Activated T-helper 1 cell treated with anti-CD3 and anti-CD28 coated beads, Interleukin-12 subunit alpha, Interleukin-12 subunit beta, Interleukin-2, Interleukin-4 antibody, amounts not matched to agents 30 ng/mL and 10 ng/mL and 1 ng/mL, durations not matched to agents 14 hours and 24 hours and 36 hours (primary cell): ENCODE measurements at regions of chr12 and their contacts with region 1.

Region 1: GRCh38 chr12:92928962-92929915 is at the start of gene EEA1:
- DNase-seq: peak; percentile 92
- H3K4me3 Mint-ChIP-seq: peak within 1 kb of the TSS; percentile 89
- H3K27ac Mint-ChIP-seq: peak within 1 kb of the TSS; percentile 96
- H3K4me1 Mint-ChIP-seq: peaks cover 31% of the 10 kb centered on the region
- H3K27me3 Mint-ChIP-seq: peaks cover 13% of the 10 kb centered on the region
- total RNA-seq, gene EEA1: 17.5 and 18.8 TPM in 2 replicates

Region 2: DNA sequence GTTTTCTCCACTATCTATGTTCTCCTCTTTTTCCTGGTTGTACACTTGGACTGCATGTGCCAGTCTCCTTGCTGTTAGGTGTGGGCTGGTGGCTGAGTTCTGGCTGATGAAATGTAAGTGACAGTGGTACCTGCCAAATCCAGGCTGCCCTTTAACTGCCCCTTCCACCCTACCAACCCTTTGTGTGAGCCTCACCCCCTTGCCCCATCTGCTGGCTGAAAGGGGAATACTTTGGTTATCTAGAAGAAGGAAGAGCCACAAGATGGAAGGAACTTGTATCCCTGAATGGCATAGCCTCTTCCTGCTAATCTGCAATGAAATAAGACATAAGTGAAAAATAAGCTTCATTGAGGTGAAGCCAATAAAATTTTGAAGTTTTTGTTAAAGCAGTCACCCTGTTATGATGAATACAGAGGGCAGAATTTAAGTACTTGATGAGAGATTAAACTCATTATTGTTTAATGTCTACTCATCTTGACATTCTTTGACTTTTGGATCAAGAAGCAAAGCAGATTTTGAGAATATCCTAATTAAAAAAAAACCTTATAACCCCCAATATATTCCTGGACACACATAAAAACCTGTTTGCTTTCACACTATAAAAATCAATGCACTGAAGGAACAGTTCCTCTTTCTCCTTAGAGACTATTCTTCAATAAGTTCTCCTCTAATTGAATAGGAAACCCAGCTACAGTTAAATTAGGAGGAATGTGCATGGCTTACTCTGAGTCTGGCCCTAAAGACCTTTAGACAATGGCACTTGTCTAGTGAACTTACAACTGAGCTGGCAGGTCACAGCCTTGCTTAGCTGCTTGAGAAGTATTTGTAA is 521.0 kb before region 1 on chr12:
- intact Hi-C with region 1: loop called (anchors 5 kb)
- DNase-seq: peak; percentile 37
- H3K4me3 Mint-ChIP-seq: no peak overlapping the region
- H3K27ac Mint-ChIP-seq: no peak overlapping the region
- H3K4me1 Mint-ChIP-seq: peaks cover 46% of the 10 kb centered on the region
- H3K27me3 Mint-ChIP-seq: no peaks in the 10 kb centered on the region

Region 3: DNA sequence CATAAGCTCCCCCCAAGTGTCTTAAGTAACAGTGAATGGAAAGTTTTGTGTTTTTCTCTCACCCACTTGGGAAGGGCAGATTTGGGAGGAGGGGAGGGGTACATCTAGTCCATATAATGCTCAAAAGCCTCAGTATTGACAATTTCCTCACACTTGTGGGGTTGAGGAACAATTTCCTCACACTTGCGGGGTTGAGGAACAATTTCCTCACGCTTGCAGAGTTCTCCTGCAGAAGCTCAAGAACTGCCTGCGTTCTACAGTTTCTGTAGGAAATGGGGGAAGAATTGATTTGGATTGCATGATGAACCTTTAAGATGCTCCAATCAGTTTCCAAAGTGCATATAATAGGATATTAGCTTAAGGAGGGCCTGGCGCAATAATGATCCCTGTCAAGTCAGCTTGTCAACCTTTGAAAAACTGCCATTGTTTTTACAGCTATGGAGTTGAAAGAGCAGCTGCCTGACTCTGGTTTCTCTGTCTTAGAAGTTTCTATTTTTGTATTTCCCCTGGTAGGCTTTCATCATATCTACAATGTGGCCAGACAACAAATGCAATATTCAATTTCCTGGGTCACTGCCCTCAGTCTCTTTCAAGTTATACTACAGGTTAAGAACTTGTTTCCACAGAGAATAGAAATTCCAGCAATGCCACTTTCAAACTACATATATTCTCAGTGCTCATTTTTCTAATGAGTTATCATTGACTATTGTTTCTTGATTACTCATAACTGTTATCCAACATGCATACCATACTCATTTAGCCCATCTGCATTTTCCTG is 159.9 kb before region 1 on chr12:
- intact Hi-C with region 1: no loop called
- DNase-seq: no peak
- H3K4me3 Mint-ChIP-seq: no peak overlapping the region
- H3K27ac Mint-ChIP-seq: no peak overlapping the region
- H3K4me1 Mint-ChIP-seq: peaks cover 11% of the 10 kb centered on the region
- H3K27me3 Mint-ChIP-seq: no peaks in the 10 kb centered on the region

Region 4: GRCh38 chr12:92827836-92828431 is 101.3 kb before region 1 on chr12:
- intact Hi-C with region 1: loop called (anchors 5 kb)
- DNase-seq: no peak
- H3K4me3 Mint-ChIP-seq: no peak overlapping the region
- H3K27ac Mint-ChIP-seq: no peak overlapping the region
- H3K4me1 Mint-ChIP-seq: no peaks in the 10 kb centered on the region
- H3K27me3 Mint-ChIP-seq: no peaks in the 10 kb centered on the region

Region 5: DNA sequence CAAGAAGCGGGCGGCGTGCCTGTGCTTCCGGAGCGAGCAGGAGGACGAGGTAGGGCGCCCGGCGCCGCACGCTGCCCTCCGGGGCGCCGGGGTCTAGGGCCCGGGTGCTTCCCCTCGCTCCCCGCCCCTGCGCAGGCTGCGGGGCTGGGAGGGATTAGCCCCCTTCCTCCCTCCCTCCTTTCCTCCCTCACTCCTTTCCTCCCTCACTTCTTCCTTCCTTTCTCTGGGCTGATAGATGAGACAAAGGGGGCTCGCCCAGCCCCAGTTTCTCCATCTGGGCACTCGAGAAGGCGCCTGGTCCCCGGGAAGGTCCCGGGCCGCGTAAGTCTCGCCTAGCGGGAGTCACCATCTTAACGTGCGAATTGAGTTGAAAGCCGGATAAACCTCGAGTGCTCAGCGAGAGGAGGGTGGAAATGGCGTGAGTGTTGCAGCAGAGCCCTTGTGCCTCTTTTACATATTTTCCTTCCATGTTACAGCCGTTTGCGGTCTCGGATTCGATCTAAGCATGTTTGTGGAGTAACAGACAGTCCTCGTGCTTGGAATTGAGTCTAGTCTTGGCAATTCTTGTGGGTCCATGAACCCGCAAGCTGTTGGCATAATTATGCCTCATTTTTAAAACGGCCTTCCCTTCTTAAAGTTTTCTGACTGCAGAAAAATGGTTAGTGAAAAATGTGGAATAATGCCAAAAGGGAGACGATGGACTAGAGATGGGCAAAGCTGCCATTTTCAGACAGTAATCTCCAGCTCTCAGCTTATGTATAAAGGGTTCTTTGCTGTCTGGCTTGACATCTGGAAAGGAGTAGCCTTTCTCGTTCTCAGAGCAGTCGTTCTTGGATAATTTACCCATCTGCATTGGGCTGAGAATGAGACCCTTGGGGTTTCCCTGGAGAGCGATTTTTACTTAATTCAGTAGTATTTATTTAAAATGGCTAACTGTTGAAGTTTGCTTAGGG is 449.4 kb after region 1 on chr12:
- intact Hi-C with region 1: loop called (anchors 1 kb)
- DNase-seq: peak; percentile 58
- H3K4me3 Mint-ChIP-seq: peak overlapping the region; percentile 100
- H3K27ac Mint-ChIP-seq: peak overlapping the region; percentile 100
- H3K4me1 Mint-ChIP-seq: peaks cover 50% of the 10 kb centered on the region
- H3K27me3 Mint-ChIP-seq: peaks cover 2% of the 10 kb centered on the region

Region 6: DNA sequence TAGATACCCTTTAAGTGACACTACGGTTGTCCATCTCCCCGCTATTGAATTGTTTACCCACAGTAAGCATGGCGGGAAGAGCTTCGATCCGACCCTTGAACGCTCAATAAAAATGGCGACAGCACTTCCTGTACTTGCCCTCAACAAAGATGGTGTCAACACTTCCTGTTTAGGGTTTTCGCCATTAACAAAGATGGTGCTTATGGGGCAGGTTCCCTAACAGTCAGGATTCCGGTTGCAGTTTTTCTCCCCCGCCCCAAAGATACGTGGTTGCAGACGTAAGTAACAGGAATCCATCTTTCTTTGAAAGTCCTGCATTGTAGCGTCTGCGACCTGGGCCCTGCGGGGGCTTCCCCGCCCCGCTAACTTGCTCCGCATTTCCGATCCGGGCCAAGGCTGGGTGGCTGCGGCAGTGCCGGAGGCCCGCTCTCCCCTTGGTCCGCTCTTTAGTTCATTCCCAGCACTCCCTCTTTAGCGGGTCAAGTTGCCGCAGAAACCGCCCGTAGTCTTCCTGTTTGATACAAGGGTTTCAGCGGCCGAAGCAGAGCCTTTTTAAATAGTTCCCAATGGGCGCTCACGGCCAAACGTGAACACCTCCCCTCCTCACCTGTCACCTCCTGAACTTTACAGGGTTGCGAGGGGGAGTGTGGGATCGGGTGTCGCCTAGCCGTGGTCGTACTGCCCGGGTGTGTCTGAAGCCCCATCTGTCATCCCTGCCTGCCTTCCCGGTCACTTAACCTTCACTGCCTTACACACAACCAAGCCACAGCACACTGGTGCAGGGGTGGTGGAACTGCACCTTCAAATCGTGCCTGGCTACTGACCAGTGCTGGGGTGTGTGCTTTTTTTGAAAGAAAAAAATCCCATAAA is 748.2 kb after region 1 on chr12 and contains the start of gene CRADD:
- intact Hi-C with region 1: loop called (anchors 1 kb)
- DNase-seq: peak; percentile 86
- H3K4me3 Mint-ChIP-seq: peak within 1 kb of the TSS; percentile 85
- H3K27ac Mint-ChIP-seq: peak within 1 kb of the TSS; percentile 96
- H3K4me1 Mint-ChIP-seq: peaks cover 38% of the 10 kb centered on the region
- H3K27me3 Mint-ChIP-seq: no peaks in the 10 kb centered on the region
- total RNA-seq, gene CRADD: 11.2 and 12.3 TPM in 2 replicates

Region 7: GRCh38 chr12:94649349-94650142 is 1720.3 kb after region 1 on chr12:
- intact Hi-C with region 1: loop called (anchors 10 kb)
- DNase-seq: peak; percentile 21
- H3K4me3 Mint-ChIP-seq: peak overlapping the region; percentile 80
- H3K27ac Mint-ChIP-seq: peak overlapping the region; percentile 18
- H3K4me1 Mint-ChIP-seq: peaks cover 11% of the 10 kb centered on the region
- H3K27me3 Mint-ChIP-seq: peaks cover 73% of the 10 kb centered on the region